H1 (cell line): ENCODE measurements at regions of chr9 and their contacts with region 1.

Region 1: DNA sequence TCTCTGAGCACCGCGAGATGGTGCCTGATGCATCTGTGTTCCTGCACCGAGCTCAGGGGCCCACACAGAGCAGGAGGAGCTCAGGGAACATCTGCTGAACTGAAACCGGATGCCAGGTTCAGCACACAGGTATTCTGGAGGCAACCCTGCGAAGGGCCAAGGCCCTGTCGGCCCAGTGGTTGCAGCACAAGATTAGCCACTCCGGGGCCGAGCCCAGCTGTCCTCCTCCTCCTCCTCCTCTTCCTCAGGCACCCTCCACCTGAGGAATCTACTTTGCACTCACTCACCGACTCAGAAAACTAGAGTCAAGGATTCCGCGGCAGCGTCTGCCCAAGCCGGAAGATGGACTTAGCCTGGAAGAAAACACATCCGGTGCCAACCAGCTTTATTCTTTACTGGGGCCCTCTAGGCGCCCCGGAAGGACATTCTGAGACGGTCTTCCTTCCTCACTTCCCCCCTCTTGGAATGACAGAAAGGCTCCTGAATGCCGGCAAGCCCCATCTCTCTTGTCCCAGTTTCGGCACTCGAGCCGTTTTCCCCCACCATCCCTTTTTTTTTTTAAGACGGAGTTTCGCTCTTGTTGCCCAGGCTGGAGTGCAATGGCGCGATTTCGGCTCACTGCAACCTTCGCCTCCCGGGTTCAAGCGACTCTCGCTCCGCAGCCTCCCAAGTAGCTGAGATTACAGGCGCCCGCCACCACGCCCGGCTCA is at the start of gene ZBTB6:
- DNase-seq: peak in 1 of 2 experiments; percentile 76
- H3K4me3 ChIP-seq: peak within 1 kb of the TSS; percentile 76 to 91 (median 88)
- H3K27ac ChIP-seq: peak within 1 kb of the TSS; percentile 93
- H3K4me1 ChIP-seq: no peaks in the 10 kb centered on the region; a peak in 2 of 7 replicates
- H3K27me3 ChIP-seq: no peaks in the 10 kb centered on the region
- CTCF ChIP-seq: no peak
- EP300 ChIP-seq: no peak
- POLR2A ChIP-seq: peak; percentile 62 to 95
- RAD21 ChIP-seq: 0 out of 4 replicates have a peak, but pooled peaks of 1 of the 2 experiments have one; percentile 10
- total RNA-seq, gene ZBTB6: 9.3 and 10.0 TPM in 2 replicates

Region 2: DNA sequence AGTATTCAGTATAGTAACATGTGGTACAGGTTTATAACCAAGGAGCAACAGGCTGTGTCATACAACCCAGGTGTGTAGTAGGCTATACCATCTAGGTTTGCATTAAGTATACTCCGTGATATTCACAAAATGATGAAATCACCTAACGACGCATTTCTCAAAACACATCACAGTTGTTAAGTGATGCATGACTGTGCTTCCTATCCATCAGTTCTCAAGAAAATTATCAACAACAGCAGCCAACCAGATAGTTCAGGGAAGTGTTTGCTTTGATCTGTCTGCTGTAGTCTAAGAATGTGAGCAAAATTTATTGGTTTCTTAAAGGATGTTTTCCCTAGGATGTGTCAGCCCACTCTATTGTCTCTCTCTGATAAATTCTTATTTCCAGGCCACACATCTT is 10.8 kb after region 1 on chr9:
- CTCF ChIA-PET with region 1: no interaction called
- POLR2A ChIA-PET with region 1: interaction called, 78 read pairs
- DNase-seq: no peak
- H3K4me3 ChIP-seq: no peak overlapping the region
- H3K27ac ChIP-seq: no peak overlapping the region
- H3K4me1 ChIP-seq: peaks cover 0 to 13% (median 5%) of the 10 kb centered on the region in 4 experiments; a peak in 5 of 7 replicates
- H3K27me3 ChIP-seq: no peaks in the 10 kb centered on the region
- CTCF ChIP-seq: no peak
- EP300 ChIP-seq: no peak
- POLR2A ChIP-seq: no peak
- RAD21 ChIP-seq: no peak